CD8-positive, alpha-beta T cell (primary cell): ENCODE measurements at regions of chr20 and their contacts with region 1.

Region 1: GRCh38 chr20:50536333-50536732 is 26.1 kb downstream of the PTPN1 start:
- DNase-seq: no peak
- ATAC-seq: no peak
- H3K4me3 ChIP-seq: no peak overlapping the region
- H3K4me3 Mint-ChIP-seq: no peak overlapping the region
- H3K27ac ChIP-seq: no peak overlapping the region
- H3K27ac Mint-ChIP-seq: no peak overlapping the region
- H3K4me1 ChIP-seq: peaks cover 40% of the 10 kb centered on the region
- H3K4me1 Mint-ChIP-seq: peaks cover 78% of the 10 kb centered on the region
- H3K27me3 ChIP-seq: no peaks in the 10 kb centered on the region
- H3K27me3 Mint-ChIP-seq: no peaks in the 10 kb centered on the region
- CTCF ChIP-seq: no peak

Region 2: DNA sequence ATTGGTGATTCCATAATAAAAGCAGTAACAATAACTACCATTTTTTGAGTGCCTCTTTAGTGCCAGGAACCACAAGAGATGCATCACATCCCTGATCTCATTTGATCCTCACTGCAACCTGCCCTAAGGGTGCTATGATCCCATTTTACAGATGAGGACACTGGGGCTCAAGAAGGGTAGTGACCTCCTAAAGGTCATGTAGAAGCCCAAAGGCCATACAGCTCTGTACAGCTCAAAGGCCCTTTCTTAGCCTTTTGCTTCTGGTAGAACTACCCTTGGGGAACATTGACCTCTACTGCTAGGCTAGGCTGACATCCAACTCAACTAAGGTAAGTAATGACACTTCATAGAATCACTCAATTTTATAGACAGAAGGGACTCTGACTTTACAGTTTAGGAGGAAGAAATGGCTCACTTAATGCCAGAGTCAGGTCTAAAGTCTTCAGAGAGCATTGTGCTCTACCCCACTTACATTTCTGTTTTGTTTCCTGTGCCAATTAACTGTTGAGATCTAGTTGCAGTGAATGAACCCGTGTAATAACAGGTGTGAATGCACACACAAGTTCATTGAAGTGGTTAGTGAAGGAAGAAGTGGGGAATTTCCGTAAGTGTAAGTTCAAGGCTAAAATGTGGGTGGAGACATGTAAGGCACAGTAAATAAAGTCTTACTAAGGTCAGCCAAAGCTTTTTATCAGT is 713.0 kb before region 1 on chr20:
- CTCF ChIA-PET with region 1: no interaction called
- POLR2A ChIA-PET with region 1: no interaction called
- intact Hi-C with region 1: no loop called
- DNase-seq: peak in 2 of 9 experiments; percentile 68 to 84
- ATAC-seq: peak; percentile 86
- H3K4me3 ChIP-seq: peak overlapping the region in 1 of 2 experiments; percentile 15
- H3K4me3 Mint-ChIP-seq: peak overlapping the region; percentile 54
- H3K27ac ChIP-seq: peak overlapping the region; percentile 6 to 44
- H3K27ac Mint-ChIP-seq: peak overlapping the region; percentile 53
- H3K4me1 ChIP-seq: peaks cover 39% of the 10 kb centered on the region
- H3K4me1 Mint-ChIP-seq: peaks cover 44% of the 10 kb centered on the region
- H3K27me3 ChIP-seq: no peaks in the 10 kb centered on the region
- H3K27me3 Mint-ChIP-seq: no peaks in the 10 kb centered on the region
- CTCF ChIP-seq: no peak

Region 3: GRCh38 chr20:50523552-50524167 is 12.7 kb before region 1 on chr20:
- CTCF ChIA-PET with region 1: interaction called, 3 read pairs
- POLR2A ChIA-PET with region 1: interaction called, 3 read pairs
- intact Hi-C with region 1: loop called in 1 of 2 experiments (anchors 2 kb)
- DNase-seq: no peak
- ATAC-seq: peak; percentile 32
- H3K4me3 ChIP-seq: no peak overlapping the region
- H3K4me3 Mint-ChIP-seq: peak overlapping the region; percentile 11
- H3K27ac ChIP-seq: peak overlapping the region in 1 of 2 experiments; percentile 62
- H3K27ac Mint-ChIP-seq: peak overlapping the region; percentile 41
- H3K4me1 ChIP-seq: peaks cover 68% of the 10 kb centered on the region
- H3K4me1 Mint-ChIP-seq: peaks cover 56% of the 10 kb centered on the region
- H3K27me3 ChIP-seq: no peaks in the 10 kb centered on the region
- H3K27me3 Mint-ChIP-seq: no peaks in the 10 kb centered on the region
- CTCF ChIP-seq: no peak

Region 4: GRCh38 chr20:50582591-50583234 is 46.4 kb after region 1 on chr20:
- CTCF ChIA-PET with region 1: no interaction called
- POLR2A ChIA-PET with region 1: no interaction called
- intact Hi-C with region 1: no loop called
- DNase-seq: no peak
- ATAC-seq: no peak
- H3K4me3 ChIP-seq: no peak overlapping the region
- H3K4me3 Mint-ChIP-seq: no peak overlapping the region
- H3K27ac ChIP-seq: no peak overlapping the region
- H3K27ac Mint-ChIP-seq: no peak overlapping the region
- H3K4me1 ChIP-seq: no peaks in the 10 kb centered on the region
- H3K4me1 Mint-ChIP-seq: no peaks in the 10 kb centered on the region
- H3K27me3 ChIP-seq: no peaks in the 10 kb centered on the region
- H3K27me3 Mint-ChIP-seq: no peaks in the 10 kb centered on the region
- CTCF ChIP-seq: no peak